ENCODE measurements at regions of chr18 and their contacts with region 1.

Region 1: DNA sequence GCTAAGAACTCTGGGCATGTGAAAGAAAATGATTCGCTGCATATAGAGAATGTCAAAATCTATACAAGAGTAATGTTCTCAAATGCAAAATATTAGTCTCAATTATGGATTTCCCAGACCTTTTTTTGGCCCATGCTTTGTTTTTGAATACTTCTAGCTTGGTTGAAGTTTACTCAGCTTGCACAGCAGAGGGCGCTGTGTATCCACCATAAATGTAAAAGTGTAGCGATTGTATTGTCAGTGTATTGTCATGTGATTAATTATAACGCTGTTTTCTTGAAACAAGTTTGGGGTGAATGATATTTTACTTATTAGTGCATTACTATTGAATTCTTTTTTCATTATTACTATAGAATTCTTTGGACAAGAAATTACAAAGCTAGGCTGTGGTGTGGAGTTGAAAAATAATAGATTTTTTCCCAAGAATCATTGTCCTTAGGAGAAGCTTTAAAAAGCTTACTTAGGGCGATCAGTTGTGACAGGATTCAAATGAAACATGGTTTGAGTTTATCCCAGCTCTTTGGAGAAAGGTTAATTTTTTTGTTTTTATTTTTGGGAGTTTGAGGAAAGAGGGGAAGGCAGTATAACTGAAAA is 98.3 kb downstream of the PIK3C3 start:
- DNase-seq: peak; percentile 34
- ATAC-seq: peak; percentile 79
- H3K4me3 ChIP-seq: no peak overlapping the region
- H3K27ac ChIP-seq: no peak overlapping the region
- H3K4me1 ChIP-seq: peaks cover 2% of the 10 kb centered on the region
- H3K27me3 ChIP-seq: no peaks in the 10 kb centered on the region
- CTCF ChIP-seq: peak; percentile 72
- EP300 ChIP-seq: no peak
- POLR2A ChIP-seq: no peak
- RAD21 ChIP-seq: peak; percentile 53; the same call in 1 of the 2 replicates

Region 2: DNA sequence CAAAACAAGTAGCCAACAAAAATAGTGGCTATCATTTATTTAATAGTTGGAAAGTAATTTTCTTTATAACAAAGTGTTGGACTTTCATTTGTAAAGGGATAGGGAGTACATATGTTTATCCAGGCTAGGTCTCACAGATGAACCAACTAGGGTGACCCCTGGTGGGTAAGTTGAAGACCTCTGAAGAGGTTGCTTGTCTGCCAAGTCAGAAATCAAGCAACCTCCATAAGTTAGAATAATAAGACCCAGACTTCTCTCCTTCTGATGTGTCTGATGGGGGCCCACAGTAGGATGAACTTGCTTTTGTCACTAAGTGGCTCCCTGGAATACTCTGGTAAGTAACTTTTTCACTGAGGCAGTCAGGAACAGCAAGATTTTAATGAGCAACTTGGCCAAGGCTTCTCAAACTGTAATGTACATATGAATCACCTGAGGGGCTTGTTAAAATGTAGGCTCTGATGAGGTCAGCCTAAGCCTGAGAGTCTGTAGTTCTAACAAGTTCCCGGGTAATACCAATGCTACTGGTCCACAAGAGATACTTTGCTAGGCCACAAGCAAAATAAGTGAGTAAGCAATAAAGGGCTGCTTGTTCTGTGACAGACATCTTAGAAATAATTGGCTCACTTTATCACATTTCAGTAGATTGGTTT is 221.3 kb after region 1 on chr18:
- CTCF ChIA-PET with region 1: interaction called, 13 read pairs
- POLR2A ChIA-PET with region 1: no interaction called
- in situ Hi-C with region 1: no loop called
- intact Hi-C with region 1: loop called (anchors 1 kb)
- DNase-seq: peak; percentile 62
- ATAC-seq: peak; percentile 86
- H3K4me3 ChIP-seq: no peak overlapping the region
- H3K27ac ChIP-seq: no peak overlapping the region
- H3K4me1 ChIP-seq: no peaks in the 10 kb centered on the region
- H3K27me3 ChIP-seq: no peaks in the 10 kb centered on the region
- CTCF ChIP-seq: peak; percentile 56
- EP300 ChIP-seq: no peak
- POLR2A ChIP-seq: no peak
- RAD21 ChIP-seq: 0 out of 2 replicates have a peak, but pooled peaks have one; percentile 37

Region 3: GRCh38 chr18:43271593-43272432 is 1218.5 kb after region 1 on chr18:
- CTCF ChIA-PET with region 1: interaction called, 4 read pairs
- POLR2A ChIA-PET with region 1: no interaction called
- in situ Hi-C with region 1: loop called (anchors 10 kb)
- intact Hi-C with region 1: loop called (anchors 2 kb)
- DNase-seq: peak; percentile 35
- ATAC-seq: no peak
- H3K4me3 ChIP-seq: no peak overlapping the region
- H3K27ac ChIP-seq: no peak overlapping the region
- H3K4me1 ChIP-seq: no peaks in the 10 kb centered on the region
- H3K27me3 ChIP-seq: no peaks in the 10 kb centered on the region
- CTCF ChIP-seq: peak; percentile 60
- EP300 ChIP-seq: no peak
- POLR2A ChIP-seq: no peak
- RAD21 ChIP-seq: no peak; the same call in 1 of the 2 replicates

Region 4: GRCh38 chr18:43396266-43396665 is 1343.0 kb after region 1 on chr18:
- CTCF ChIA-PET with region 1: no interaction called
- POLR2A ChIA-PET with region 1: no interaction called
- in situ Hi-C with region 1: no loop called
- intact Hi-C with region 1: loop called (anchors 5 kb)
- DNase-seq: no peak
- ATAC-seq: no peak
- H3K4me3 ChIP-seq: no peak overlapping the region
- H3K27ac ChIP-seq: no peak overlapping the region
- H3K4me1 ChIP-seq: no peaks in the 10 kb centered on the region
- H3K27me3 ChIP-seq: no peaks in the 10 kb centered on the region
- CTCF ChIP-seq: peak; percentile 18; the same call in 1 of the 2 replicates
- EP300 ChIP-seq: no peak
- POLR2A ChIP-seq: no peak
- RAD21 ChIP-seq: no peak

Region 5: GRCh38 chr18:43563780-43564179 is 1510.5 kb after region 1 on chr18:
- CTCF ChIA-PET with region 1: no interaction called
- POLR2A ChIA-PET with region 1: no interaction called
- in situ Hi-C with region 1: loop called (anchors 10 kb)
- intact Hi-C with region 1: loop called (anchors 5 kb)
- DNase-seq: peak; percentile 12
- ATAC-seq: peak; percentile 84
- H3K4me3 ChIP-seq: no peak overlapping the region
- H3K27ac ChIP-seq: no peak overlapping the region
- H3K4me1 ChIP-seq: no peaks in the 10 kb centered on the region
- H3K27me3 ChIP-seq: no peaks in the 10 kb centered on the region
- CTCF ChIP-seq: peak; percentile 67
- EP300 ChIP-seq: no peak
- POLR2A ChIP-seq: no peak
- RAD21 ChIP-seq: peak; percentile 20; the same call in 1 of the 2 replicates

Region 6: DNA sequence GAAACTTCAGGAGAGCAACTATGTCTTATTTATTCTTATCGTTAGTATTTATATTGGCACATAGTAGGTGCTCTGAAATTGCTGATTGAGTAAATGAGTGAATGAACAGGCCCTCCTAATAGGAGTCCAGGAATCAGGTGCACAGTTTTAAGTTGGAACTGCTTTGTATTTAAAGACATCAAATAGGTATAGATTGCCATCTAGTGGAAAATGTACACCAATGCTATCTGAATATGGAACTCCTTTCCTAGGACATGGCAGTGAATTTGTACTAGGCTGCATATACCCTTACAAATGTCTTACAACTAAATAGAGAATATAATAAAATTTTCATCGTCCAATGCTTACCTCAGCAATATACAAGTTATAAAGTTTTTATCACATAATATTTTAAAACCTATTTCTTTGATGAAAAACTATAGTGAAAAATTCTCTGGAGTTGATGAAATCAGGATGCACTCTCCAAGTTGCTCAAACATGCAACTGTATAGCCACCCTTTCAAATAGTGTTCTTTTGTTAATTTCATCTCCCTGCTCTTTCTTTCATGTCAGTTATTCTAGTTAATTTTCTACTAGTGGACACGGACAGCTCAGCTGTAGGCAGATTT is 1542.9 kb after region 1 on chr18:
- CTCF ChIA-PET with region 1: no interaction called
- POLR2A ChIA-PET with region 1: no interaction called
- in situ Hi-C with region 1: no loop called
- intact Hi-C with region 1: loop called (anchors 10 kb)
- DNase-seq: peak; percentile 13
- ATAC-seq: peak; percentile 84
- H3K4me3 ChIP-seq: no peak overlapping the region
- H3K27ac ChIP-seq: no peak overlapping the region
- H3K4me1 ChIP-seq: no peaks in the 10 kb centered on the region
- H3K27me3 ChIP-seq: no peaks in the 10 kb centered on the region
- CTCF ChIP-seq: peak; percentile 62
- EP300 ChIP-seq: no peak
- POLR2A ChIP-seq: no peak
- RAD21 ChIP-seq: no peak